HepG2 (cell line): ENCODE measurements at regions of chr15 and their contacts with region 1.

Region 1: DNA sequence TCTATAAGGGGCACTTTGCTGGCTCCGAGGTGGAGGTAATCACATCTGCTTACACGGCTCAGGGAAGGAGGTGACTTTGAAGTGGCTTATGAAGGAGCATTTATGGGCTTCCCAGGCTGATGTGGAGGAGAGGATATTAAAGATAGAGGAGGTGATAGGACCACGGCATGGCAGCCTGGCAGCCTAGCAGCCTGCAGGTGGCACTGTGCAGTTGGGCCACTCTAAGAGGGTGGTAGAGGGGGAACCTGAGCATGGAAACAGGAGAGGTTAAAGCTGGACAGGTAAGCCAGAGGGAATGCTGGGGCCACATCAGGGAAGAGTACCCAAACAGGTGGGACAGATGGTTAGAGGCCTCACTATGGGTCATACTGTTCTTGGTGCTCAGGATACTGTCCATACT is 375.0 kb downstream of the WDR72 start:
- DNase-seq: peak; percentile 12
- ATAC-seq: peak; percentile 81
- H3K4me3 ChIP-seq: no peak overlapping the region
- H3K27ac ChIP-seq: no peak overlapping the region
- H3K4me1 ChIP-seq: peaks cover 18% of the 10 kb centered on the region
- H3K27me3 ChIP-seq: no peaks in the 10 kb centered on the region
- CTCF ChIP-seq: peak; percentile 63
- EP300 ChIP-seq: no peak
- POLR2A ChIP-seq: no peak
- RAD21 ChIP-seq: peak; percentile 45; the same call in 1 of the 2 replicates

Region 2: DNA sequence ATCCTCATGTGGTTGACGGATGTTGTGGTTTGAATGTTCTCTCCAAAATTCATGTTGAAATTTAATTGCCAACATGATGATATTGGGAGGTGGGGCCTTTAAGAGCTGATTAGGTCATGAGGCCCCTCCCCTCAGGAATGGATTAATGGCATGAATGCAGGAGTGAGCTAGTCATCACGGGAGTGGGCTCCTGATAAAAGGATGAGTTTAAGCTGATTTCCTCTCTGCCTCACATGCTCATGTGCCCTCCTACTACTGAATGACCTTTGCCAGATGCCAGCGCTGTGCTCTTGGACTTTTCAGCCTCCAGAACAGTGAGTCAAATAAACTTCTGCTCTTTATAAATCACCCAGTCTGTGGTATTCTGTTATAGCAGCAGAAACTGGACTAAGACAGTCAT is 966.9 kb before region 1 on chr15:
- CTCF ChIA-PET with region 1: no interaction called
- POLR2A ChIA-PET with region 1: no interaction called
- in situ Hi-C with region 1: no loop called
- intact Hi-C with region 1: no loop called
- DNase-seq: no peak
- ATAC-seq: no peak
- H3K4me3 ChIP-seq: no peak overlapping the region
- H3K27ac ChIP-seq: no peak overlapping the region
- H3K4me1 ChIP-seq: no peaks in the 10 kb centered on the region
- H3K27me3 ChIP-seq: no peaks in the 10 kb centered on the region
- CTCF ChIP-seq: no peak
- EP300 ChIP-seq: no peak
- POLR2A ChIP-seq: no peak
- RAD21 ChIP-seq: no peak

Region 3: DNA sequence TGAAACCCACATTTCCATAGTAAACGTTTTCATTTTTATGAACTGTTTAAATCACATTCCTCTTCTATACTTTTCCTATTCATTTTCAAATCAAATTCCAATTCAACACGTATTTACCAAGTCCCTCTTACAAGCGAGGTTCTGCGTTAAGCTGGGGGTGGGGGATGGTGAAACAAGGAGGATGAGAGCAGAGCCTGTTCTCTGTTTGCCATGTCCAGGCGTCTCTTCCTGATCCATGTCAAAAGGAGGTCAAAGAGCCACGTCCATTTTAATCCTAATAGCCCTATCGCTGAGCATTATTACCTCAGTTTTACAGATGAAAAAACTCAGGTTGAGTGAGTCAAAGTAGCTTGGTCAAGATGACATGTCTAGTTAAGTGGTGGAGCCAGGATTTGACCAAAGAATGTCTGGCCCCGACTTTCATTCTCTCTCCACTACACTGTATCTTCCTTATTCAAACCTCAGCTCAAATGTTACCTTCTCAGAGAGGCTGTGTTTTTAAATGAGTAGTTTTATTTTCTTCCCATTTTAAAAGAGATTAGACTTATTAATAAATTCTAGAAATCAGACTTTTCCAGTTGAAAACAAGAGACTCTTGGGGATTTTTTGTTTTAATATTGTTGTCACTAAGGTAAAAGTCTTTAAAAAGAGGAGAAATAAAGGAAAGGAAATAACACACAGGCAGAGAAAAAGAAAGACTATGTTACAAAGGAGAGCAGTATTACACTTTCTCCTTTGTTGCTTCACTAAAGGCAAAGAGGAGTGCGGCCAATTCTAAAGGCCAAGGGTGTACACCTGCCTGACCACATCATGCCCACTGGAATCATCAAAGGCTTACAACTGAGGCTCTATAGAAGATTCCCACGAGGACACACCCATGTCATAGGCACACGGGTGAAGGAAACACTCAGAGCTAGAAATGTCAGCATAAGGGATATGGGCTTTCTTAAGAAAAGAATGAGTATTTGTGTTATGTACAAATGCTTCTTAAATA is 898.1 kb before region 1 on chr15:
- CTCF ChIA-PET with region 1: no interaction called
- POLR2A ChIA-PET with region 1: no interaction called
- in situ Hi-C with region 1: no loop called
- intact Hi-C with region 1: no loop called
- DNase-seq: no peak
- ATAC-seq: no peak; the same call in 2 of the 3 replicates
- H3K4me3 ChIP-seq: no peak overlapping the region
- H3K27ac ChIP-seq: no peak overlapping the region
- H3K4me1 ChIP-seq: peaks cover 7% of the 10 kb centered on the region; the same call in 1 of the 2 replicates
- H3K27me3 ChIP-seq: no peaks in the 10 kb centered on the region
- CTCF ChIP-seq: no peak
- EP300 ChIP-seq: no peak
- POLR2A ChIP-seq: no peak
- RAD21 ChIP-seq: no peak

Region 4: GRCh38 chr15:52790162-52790708 is 594.2 kb before region 1 on chr15 and contains the start of gene ONECUT1:
- CTCF ChIA-PET with region 1: no interaction called
- POLR2A ChIA-PET with region 1: no interaction called
- in situ Hi-C with region 1: no loop called
- intact Hi-C with region 1: no loop called
- DNase-seq: peak; percentile 37
- ATAC-seq: peak; percentile 64
- H3K4me3 ChIP-seq: peak within 1 kb of the TSS; percentile 67 to 80 (median 76)
- H3K27ac ChIP-seq: peak within 1 kb of the TSS; percentile 69
- H3K4me1 ChIP-seq: peaks cover 22% of the 10 kb centered on the region
- H3K27me3 ChIP-seq: peaks cover 0 to 21% of the 10 kb centered on the region in 2 experiments; a peak in 3 of 5 replicates
- CTCF ChIP-seq: no peak
- EP300 ChIP-seq: no peak
- POLR2A ChIP-seq: no peak
- RAD21 ChIP-seq: peak; percentile 44; the same call in 1 of the 2 replicates
- total RNA-seq, gene ONECUT1: 9.1 and 9.3 TPM in 2 replicates

Region 5: DNA sequence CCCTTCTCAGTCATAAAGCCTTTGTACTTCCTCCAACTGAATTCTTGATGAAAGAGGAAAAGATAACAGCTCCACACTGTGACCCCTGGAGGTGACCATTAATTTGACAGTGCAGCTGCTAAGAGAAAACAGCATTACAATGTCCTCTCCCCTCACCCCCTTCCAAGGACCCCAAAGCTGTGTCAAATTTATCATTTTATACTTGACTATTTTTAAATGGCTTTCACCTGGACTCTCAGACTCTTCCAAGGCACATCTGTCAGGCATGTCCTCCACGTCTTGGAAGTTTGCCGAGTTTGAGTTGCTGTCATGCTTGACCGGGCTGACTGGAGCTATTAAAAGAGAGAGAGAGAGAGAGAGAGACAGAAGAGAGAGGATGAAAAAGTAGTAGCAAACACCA is 138.6 kb after region 1 on chr15:
- CTCF ChIA-PET with region 1: no interaction called
- POLR2A ChIA-PET with region 1: no interaction called
- in situ Hi-C with region 1: no loop called
- intact Hi-C with region 1: loop called (anchors 10 kb)
- DNase-seq: no peak
- ATAC-seq: no peak
- H3K4me3 ChIP-seq: no peak overlapping the region
- H3K27ac ChIP-seq: no peak overlapping the region
- H3K4me1 ChIP-seq: peaks cover 34% of the 10 kb centered on the region
- H3K27me3 ChIP-seq: no peaks in the 10 kb centered on the region
- CTCF ChIP-seq: no peak
- EP300 ChIP-seq: no peak
- POLR2A ChIP-seq: no peak
- RAD21 ChIP-seq: no peak

Region 6: GRCh38 chr15:53586799-53587198 is 202.4 kb after region 1 on chr15:
- CTCF ChIA-PET with region 1: no interaction called
- POLR2A ChIA-PET with region 1: no interaction called
- in situ Hi-C with region 1: no loop called
- intact Hi-C with region 1: loop called (anchors 10 kb)
- DNase-seq: peak; percentile 37
- ATAC-seq: no peak
- H3K4me3 ChIP-seq: no peak overlapping the region
- H3K27ac ChIP-seq: no peak overlapping the region
- H3K4me1 ChIP-seq: peaks cover 14% of the 10 kb centered on the region
- H3K27me3 ChIP-seq: no peaks in the 10 kb centered on the region; a peak in 1 of 5 replicates
- CTCF ChIP-seq: peak; percentile 62
- EP300 ChIP-seq: no peak; a peak in 1 of 4 replicates
- POLR2A ChIP-seq: no peak
- RAD21 ChIP-seq: no peak